Vagina (tissue), 2 donors: ENCODE measurements at regions of chr3 and their contacts with region 1.

Region 1: GRCh38 chr3:184185461-184186308 is at the start of gene ABCF3:
- DNase-seq: peak; percentile 99 to 100
- H3K4me3 ChIP-seq: peak within 1 kb of the TSS; percentile 97 to 98
- H3K27ac ChIP-seq: peak within 1 kb of the TSS; percentile 74
- H3K4me1 ChIP-seq: peaks cover 33% of the 10 kb centered on the region
- H3K27me3 ChIP-seq: no peaks in the 10 kb centered on the region
- CTCF ChIP-seq: no peak
- POLR2A ChIP-seq: peak in 1 of 2 donors; percentile 72
- total RNA-seq, gene ABCF3: 94.0 TPM

Region 2: GRCh38 chr3:184005941-184006507 is 179.7 kb before region 1 on chr3:
- intact Hi-C with region 1: no loop called
- DNase-seq: no peak
- H3K4me3 ChIP-seq: peak overlapping the region in 1 of 2 donors; percentile 1
- H3K27ac ChIP-seq: no peak overlapping the region
- H3K4me1 ChIP-seq: peaks cover 27% of the 10 kb centered on the region
- H3K27me3 ChIP-seq: no peaks in the 10 kb centered on the region
- CTCF ChIP-seq: no peak
- POLR2A ChIP-seq: no peak

Region 3: GRCh38 chr3:184335661-184336546 is 150.2 kb after region 1 on chr3:
- intact Hi-C with region 1: loop called (anchors 10 kb)
- DNase-seq: no peak
- H3K4me3 ChIP-seq: peak overlapping the region; percentile 76 to 85
- H3K27ac ChIP-seq: peak overlapping the region; percentile 97
- H3K4me1 ChIP-seq: peaks cover 48% of the 10 kb centered on the region
- H3K27me3 ChIP-seq: no peaks in the 10 kb centered on the region
- CTCF ChIP-seq: no peak
- POLR2A ChIP-seq: peak in 1 of 2 donors; percentile 92